ENCODE measurements at regions of chr22 and their contacts with region 1.

Region 1: GRCh38 chr22:30444632-30445437 is 19.3 kb downstream of the MTFP1 start:
- DNase-seq: peak; percentile 62
- H3K4me3 Mint-ChIP-seq: peak overlapping the region; percentile 13
- H3K27ac Mint-ChIP-seq: no peak overlapping the region
- H3K4me1 Mint-ChIP-seq: peaks cover 26% of the 10 kb centered on the region
- H3K27me3 Mint-ChIP-seq: peaks cover 24% of the 10 kb centered on the region

Region 2: GRCh38 chr22:30459181-30460052 is 14.6 kb after region 1 on chr22:
- CTCF ChIA-PET with region 1: interaction called, 17 read pairs
- POLR2A ChIA-PET with region 1: no interaction called
- DNase-seq: peak; percentile 41
- H3K4me3 Mint-ChIP-seq: no peak overlapping the region
- H3K27ac Mint-ChIP-seq: no peak overlapping the region
- H3K4me1 Mint-ChIP-seq: peaks cover 5% of the 10 kb centered on the region
- H3K27me3 Mint-ChIP-seq: no peaks in the 10 kb centered on the region